Heart left ventricle (tissue), 16 donors: ENCODE measurements at regions of chr11 and their contacts with region 1.

Region 1: DNA sequence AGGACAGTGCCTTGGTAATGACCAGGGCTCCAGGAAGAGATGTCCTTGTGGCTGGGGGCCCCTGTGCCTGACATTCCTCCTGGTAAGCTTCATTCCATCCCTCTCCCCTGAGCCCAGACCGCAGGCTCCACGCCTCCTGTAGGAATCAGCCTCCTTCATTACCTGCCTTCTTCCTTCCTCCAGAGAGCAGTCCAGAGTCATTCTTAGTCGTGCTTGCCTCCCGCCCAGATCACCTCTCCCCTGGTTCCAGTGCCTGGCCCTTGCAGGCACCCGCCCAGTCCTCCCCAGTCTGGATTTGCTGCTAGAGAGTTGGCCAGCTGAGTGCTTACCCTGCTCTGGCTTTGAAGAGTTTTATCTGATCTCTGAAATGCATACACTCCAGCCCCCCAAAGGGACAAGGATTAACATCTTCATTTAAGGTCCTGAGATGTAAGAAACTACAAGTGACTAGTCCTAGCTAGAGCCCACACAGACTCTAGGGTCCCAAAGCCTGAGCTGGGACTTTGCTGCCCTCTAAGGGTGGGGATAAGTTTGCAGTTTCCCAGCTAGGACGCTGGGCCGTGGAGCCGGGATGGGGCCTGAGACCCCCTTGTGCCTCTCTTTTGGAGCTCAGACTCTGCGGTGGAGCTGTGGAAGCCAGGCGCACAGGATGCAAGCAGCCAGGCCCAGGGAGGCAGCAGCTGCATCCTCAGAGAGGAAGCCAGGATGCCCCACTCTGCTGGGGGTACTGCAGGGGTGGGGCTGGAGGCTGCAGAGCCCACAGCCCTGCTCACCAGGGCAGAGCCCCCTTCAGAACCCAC is 1.6 kb downstream of the NR1H3 start:
- DNase-seq: peak in 2 of 5 donors; percentile 54 to 55
- ATAC-seq: peak; percentile 22 to 57 (median 46)
- H3K4me3 ChIP-seq: peak overlapping the region in 6 of 12 donors; percentile 43 to 57 (median 50)
- H3K27ac ChIP-seq: peak overlapping the region in 10 of 12 donors; percentile 9 to 90 (median 82)
- H3K4me1 ChIP-seq: peaks cover 9 to 62% (median 46%) of the 10 kb centered on the region in 12 donors
- H3K27me3 ChIP-seq: no peaks in the 10 kb centered on the region
- CTCF ChIP-seq: peak; percentile 58 to 82 (median 69)
- POLR2A ChIP-seq: no peak

Region 2: GRCh38 chr11:47201015-47201414 is 58.4 kb before region 1 on chr11:
- intact Hi-C with region 1: no loop called
- DNase-seq: no peak
- ATAC-seq: no peak
- H3K4me3 ChIP-seq: no peak overlapping the region
- H3K27ac ChIP-seq: no peak overlapping the region
- H3K4me1 ChIP-seq: no peaks in the 10 kb centered on the region
- H3K27me3 ChIP-seq: peaks cover 0 to 2% (median 0%) of the 10 kb centered on the region in 9 donors
- CTCF ChIP-seq: no peak
- POLR2A ChIP-seq: no peak

Region 3: GRCh38 chr11:47233989-47234668 is 25.2 kb before region 1 on chr11:
- intact Hi-C with region 1: loop called in 1 of 10 experiments (anchors 2 kb)
- DNase-seq: peak; percentile 24 to 54 (median 47)
- ATAC-seq: peak; percentile 34 to 77 (median 69)
- H3K4me3 ChIP-seq: no peak overlapping the region
- H3K27ac ChIP-seq: peak overlapping the region in 10 of 12 donors; percentile 6 to 73 (median 37)
- H3K4me1 ChIP-seq: peaks cover 0 to 32% (median 10%) of the 10 kb centered on the region in 12 donors
- H3K27me3 ChIP-seq: no peaks in the 10 kb centered on the region
- CTCF ChIP-seq: peak in 11 of 12 donors; percentile 19 to 59 (median 36)
- POLR2A ChIP-seq: no peak

Region 4: GRCh38 chr11:47329987-47330931 is 70.9 kb after region 1 on chr11:
- intact Hi-C with region 1: no loop called
- DNase-seq: peak in 4 of 5 donors; percentile 48 to 71 (median 54)
- ATAC-seq: peak; percentile 23 to 40 (median 34)
- H3K4me3 ChIP-seq: no peak overlapping the region
- H3K27ac ChIP-seq: peak overlapping the region; percentile 43 to 83 (median 68)
- H3K4me1 ChIP-seq: peaks cover 0 to 76% (median 39%) of the 10 kb centered on the region in 12 donors
- H3K27me3 ChIP-seq: no peaks in the 10 kb centered on the region
- CTCF ChIP-seq: peak in 1 of 12 donors; percentile 19
- POLR2A ChIP-seq: no peak

Region 5: DNA sequence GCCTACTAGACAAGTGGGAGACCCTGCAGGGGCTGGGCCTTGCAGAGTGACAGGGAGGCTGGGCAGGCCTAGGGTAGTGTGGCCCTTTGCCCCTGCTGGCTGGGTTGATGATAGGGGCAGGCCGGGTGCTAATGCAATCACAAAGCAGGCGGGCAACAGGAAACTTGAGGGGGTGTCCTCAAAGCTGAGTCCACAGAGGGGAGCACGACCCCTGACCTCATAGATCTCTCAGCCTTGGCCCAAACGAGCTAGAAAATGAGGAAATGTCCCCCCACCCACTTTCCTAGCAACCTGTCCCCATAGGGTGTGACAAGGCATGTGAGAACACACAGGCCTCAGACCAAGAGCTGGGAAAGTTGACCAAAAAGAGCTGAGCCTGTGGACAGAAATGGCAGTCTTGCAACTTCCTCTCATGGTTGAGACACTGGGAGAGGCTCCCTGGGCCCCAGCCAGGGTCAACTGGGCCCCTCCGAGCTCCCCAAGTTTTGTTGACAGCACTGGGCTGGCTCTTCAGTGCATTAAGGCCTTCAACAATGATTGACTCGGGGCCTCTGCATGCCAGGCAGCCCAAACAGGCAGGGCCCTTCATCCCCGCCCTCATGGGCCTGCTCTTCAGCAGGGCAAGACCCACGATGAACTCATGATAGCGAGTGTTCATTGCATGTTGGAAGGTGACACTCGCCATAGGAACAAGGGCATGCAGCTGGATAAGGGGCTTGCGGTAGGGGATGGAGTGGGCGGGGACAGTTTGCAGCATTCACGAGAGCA is 128.7 kb after region 1 on chr11:
- intact Hi-C with region 1: no loop called
- DNase-seq: no peak
- ATAC-seq: peak in 2 of 4 donors; percentile 19 to 46
- H3K4me3 ChIP-seq: no peak overlapping the region
- H3K27ac ChIP-seq: peak overlapping the region in 1 of 12 donors; percentile 97
- H3K4me1 ChIP-seq: peaks cover 0 to 65% (median 0%) of the 10 kb centered on the region in 12 donors
- H3K27me3 ChIP-seq: no peaks in the 10 kb centered on the region
- CTCF ChIP-seq: no peak
- POLR2A ChIP-seq: no peak